Lower lobe of right lung (tissue), 2 donors: ENCODE measurements at regions of chr4 and their contacts with region 1.

Region 1: DNA sequence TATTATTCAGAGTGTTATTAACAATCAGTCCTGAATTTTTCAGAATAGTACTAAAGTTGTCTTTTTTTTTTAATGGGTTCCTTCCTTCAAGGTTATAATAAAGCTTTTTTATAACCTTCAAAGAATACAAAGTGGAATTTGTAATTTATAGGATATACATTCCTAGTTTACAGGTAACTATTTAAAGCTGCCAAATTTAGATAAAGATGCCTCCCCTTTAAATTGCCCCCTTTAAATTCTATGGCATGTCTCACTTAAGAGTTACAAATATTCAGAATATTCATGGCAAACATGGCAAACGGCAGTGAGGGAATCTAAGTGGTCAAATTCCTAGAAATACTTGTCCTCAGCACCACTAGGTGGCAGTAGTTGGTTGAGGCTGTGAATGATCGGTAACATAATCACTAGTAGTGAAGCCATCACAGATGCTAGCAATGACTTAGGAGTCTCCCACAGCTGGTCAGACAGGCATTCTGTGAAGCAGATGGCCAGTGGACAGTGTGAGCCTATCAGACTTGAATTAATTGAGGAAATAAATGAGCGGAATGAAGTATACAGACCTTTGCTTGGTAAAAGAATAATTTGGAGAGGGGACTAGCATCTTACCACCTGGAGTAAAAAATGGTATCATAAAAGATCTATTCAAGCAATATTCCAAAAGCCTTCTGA is 86.4 kb downstream of the CBR4 start:
- DNase-seq: no peak
- ATAC-seq: peak; percentile 77 to 85
- H3K4me3 ChIP-seq: no peak overlapping the region
- H3K27ac ChIP-seq: no peak overlapping the region
- H3K4me1 ChIP-seq: no peaks in the 10 kb centered on the region
- H3K27me3 ChIP-seq: no peaks in the 10 kb centered on the region
- CTCF ChIP-seq: peak; percentile 81

Region 2: DNA sequence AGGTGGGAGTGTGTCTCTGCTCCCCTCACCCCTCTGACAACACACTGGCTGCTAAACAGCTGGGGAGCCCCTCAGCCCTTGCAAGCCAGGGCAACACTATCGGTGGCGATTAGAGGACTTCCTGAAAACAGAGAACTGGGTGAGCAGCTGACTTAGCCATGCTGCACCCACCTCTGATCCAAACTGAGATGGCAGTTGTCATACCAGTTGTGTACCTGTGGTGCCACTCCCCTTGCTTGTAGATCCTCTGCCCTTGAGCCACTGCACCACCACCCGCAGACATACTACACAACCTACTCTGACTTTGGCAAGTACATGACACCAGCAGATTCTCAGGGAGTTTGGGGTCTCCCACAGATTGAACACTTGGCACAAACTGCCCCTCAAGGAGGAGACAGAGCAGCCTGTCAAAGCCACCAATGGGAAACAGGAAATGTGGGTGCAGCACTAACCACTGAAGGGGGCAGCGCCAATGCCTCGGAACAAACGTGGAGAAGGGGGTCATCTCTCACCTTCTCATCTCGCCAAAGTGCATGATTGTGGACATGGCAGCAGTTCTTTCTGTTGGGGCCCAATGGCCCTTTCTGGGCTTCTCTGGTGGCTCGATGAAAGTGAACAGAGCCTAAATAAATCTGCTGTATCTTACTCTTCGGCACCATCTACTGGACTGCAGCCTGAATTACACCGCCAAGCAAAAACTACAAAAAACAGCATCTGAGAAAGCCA is 568.9 kb after region 1 on chr4:
- intact Hi-C with region 1: loop called (anchors 5 kb)
- DNase-seq: no peak
- ATAC-seq: peak; percentile 63 to 70
- H3K4me3 ChIP-seq: no peak overlapping the region
- H3K27ac ChIP-seq: no peak overlapping the region
- H3K4me1 ChIP-seq: no peaks in the 10 kb centered on the region
- H3K27me3 ChIP-seq: no peaks in the 10 kb centered on the region
- CTCF ChIP-seq: peak; percentile 65